ENCODE measurements at regions of chr6 and their contacts with region 1.

Region 1: DNA sequence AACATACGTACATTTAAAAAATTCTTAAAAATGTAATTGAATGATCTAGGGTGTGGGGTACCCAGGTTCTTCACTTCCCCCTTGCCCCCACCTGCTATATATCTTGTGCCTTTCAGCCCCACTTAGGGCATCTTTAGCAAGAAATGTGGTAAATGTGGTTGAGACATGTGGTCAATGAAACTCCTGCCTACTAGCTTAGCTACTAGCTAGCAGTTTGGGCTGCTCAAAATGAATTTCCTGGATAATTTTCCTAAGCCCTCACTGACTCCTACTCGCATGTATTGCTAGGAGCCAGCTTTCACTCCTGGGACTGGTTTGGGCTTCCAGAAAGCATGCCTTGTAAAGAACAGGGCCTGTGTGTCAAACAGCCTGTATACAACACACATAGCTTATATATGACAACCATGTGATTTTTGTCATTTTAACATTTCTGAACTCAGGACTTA is 257.3 kb downstream of the ATXN1 start:
- DNase-seq: no peak
- H3K4me3 ChIP-seq: no peak overlapping the region
- H3K27ac ChIP-seq: peak overlapping the region; percentile 9
- H3K4me1 ChIP-seq: peaks cover 27% of the 10 kb centered on the region
- H3K27me3 ChIP-seq: no peaks in the 10 kb centered on the region
- CTCF ChIP-seq: no peak
- POLR2A ChIP-seq: no peak

Region 2: GRCh38 chr6:16332175-16332542 is 171.8 kb before region 1 on chr6:
- intact Hi-C with region 1: loop called (anchors 10 kb)
- DNase-seq: no peak
- H3K4me3 ChIP-seq: no peak overlapping the region
- H3K27ac ChIP-seq: peak overlapping the region; percentile 42
- H3K4me1 ChIP-seq: peaks cover 62% of the 10 kb centered on the region
- H3K27me3 ChIP-seq: no peaks in the 10 kb centered on the region
- CTCF ChIP-seq: peak; percentile 58 to 84 (median 77)
- POLR2A ChIP-seq: no peak